GM12878 (cell line): ENCODE measurements at regions of chr6 and their contacts with region 1.

Region 1: GRCh38 chr6:26473758-26474438 is 16.1 kb downstream of the BTN2A1 start:
- DNase-seq: peak; percentile 97
- ATAC-seq: peak; percentile 95
- H3K4me3 ChIP-seq: peak overlapping the region; percentile 77
- H3K27ac ChIP-seq: peak overlapping the region; percentile 100
- H3K4me1 ChIP-seq: peaks cover 29% of the 10 kb centered on the region
- H3K27me3 ChIP-seq: no peaks in the 10 kb centered on the region
- CTCF ChIP-seq: no peak
- EP300 ChIP-seq: no peak; a peak in 1 of 4 replicates
- POLR2A ChIP-seq: peak; percentile 87
- RAD21 ChIP-seq: no peak

Region 2: DNA sequence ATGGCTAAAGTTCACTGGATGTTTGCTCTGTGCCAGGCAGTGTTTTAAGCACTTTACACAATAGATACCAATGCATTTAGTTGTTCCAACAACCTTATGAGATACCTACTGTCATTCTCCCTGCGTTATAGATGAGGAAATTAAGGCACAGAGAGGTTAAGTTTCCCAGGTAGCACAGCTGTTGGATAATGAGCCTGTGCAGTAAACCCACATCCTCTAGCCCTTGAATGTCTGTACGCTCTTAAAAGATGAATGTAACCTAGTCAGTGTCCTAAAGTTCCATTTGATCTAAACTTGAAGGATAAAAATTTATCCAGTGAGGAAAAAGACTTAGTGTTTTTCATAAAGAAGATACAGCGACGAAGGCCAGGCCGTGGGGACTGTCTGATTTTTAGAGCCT is 358.7 kb before region 1 on chr6:
- CTCF ChIA-PET with region 1: no interaction called
- POLR2A ChIA-PET with region 1: no interaction called
- RAD21 ChIA-PET with region 1: no interaction called
- SMC1A ChIA-PET with region 1: no interaction called
- in situ Hi-C with region 1: no loop called
- intact Hi-C with region 1: no loop called
- DNase-seq: no peak
- ATAC-seq: no peak
- H3K4me3 ChIP-seq: no peak overlapping the region
- H3K27ac ChIP-seq: no peak overlapping the region
- H3K4me1 ChIP-seq: no peaks in the 10 kb centered on the region
- H3K27me3 ChIP-seq: no peaks in the 10 kb centered on the region
- CTCF ChIP-seq: no peak
- EP300 ChIP-seq: no peak
- POLR2A ChIP-seq: no peak
- RAD21 ChIP-seq: no peak

Region 3: GRCh38 chr6:26126396-26127235 is 347.3 kb before region 1 on chr6:
- CTCF ChIA-PET with region 1: no interaction called
- POLR2A ChIA-PET with region 1: no interaction called
- RAD21 ChIA-PET with region 1: no interaction called
- SMC1A ChIA-PET with region 1: no interaction called
- in situ Hi-C with region 1: no loop called
- intact Hi-C with region 1: no loop called
- DNase-seq: no peak
- ATAC-seq: no peak
- H3K4me3 ChIP-seq: peak overlapping the region; percentile 83
- H3K27ac ChIP-seq: peak overlapping the region; percentile 89
- H3K4me1 ChIP-seq: peaks cover 2% of the 10 kb centered on the region; the same call in 1 of the 2 replicates
- H3K27me3 ChIP-seq: no peaks in the 10 kb centered on the region
- CTCF ChIP-seq: no peak
- EP300 ChIP-seq: no peak
- POLR2A ChIP-seq: no peak
- RAD21 ChIP-seq: no peak

Region 4: DNA sequence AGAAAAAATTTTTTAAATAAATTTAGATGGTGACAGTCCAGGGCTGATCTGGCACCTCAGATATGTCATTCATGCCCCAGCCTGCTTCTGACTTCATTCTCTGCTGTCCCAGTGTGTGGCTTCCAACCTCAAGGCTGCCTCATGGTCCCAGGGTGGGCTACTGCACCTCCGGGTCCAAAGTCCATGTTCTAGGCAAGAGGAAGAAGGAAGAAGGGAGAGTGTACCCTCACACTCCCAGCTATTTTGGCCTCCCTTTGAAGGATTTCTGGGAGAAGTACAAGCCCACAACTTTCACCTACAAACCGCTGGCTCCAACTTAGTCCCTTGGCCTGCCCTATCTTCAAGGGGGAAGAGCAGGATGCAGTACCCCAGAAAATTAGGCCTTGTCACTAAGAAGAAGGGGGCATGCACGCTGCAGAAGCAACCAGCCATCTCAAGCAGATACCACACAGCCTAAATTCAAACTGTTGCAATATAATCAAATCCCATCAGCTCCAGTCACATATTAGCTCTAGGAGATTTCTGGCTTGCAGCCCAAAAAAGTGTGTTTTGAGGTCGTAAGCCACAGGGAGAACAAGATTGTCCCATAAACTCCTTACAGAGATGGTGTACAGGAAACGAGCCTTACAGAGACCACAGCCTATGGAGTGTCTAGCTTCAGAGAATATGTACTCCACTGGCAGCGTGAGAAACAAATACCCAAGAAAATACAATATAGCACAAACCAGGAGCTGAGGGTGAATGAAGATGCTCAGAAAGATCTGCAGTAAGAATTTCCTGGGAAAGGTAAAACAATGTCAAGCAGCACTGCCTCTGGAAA is 109.8 kb before region 1 on chr6:
- CTCF ChIA-PET with region 1: no interaction called
- POLR2A ChIA-PET with region 1: interaction called, 3 read pairs
- RAD21 ChIA-PET with region 1: interaction called, 10 read pairs
- SMC1A ChIA-PET with region 1: interaction called, 6 read pairs
- in situ Hi-C with region 1: no loop called
- intact Hi-C with region 1: no loop called
- DNase-seq: peak; percentile 17
- ATAC-seq: peak; percentile 39
- H3K4me3 ChIP-seq: peak overlapping the region; percentile 99
- H3K27ac ChIP-seq: peak overlapping the region; percentile 89
- H3K4me1 ChIP-seq: peaks cover 21% of the 10 kb centered on the region
- H3K27me3 ChIP-seq: no peaks in the 10 kb centered on the region
- CTCF ChIP-seq: no peak
- EP300 ChIP-seq: no peak
- POLR2A ChIP-seq: no peak
- RAD21 ChIP-seq: no peak

Region 5: GRCh38 chr6:26445934-26446667 is 27.8 kb before region 1 on chr6:
- CTCF ChIA-PET with region 1: interaction called, 5 read pairs
- POLR2A ChIA-PET with region 1: interaction called, 38 read pairs
- RAD21 ChIA-PET with region 1: interaction called, 27 read pairs
- SMC1A ChIA-PET with region 1: interaction called, 26 read pairs
- in situ Hi-C with region 1: no loop called
- intact Hi-C with region 1: no loop called
- DNase-seq: peak; percentile 76
- ATAC-seq: peak; percentile 98
- H3K4me3 ChIP-seq: peak overlapping the region; percentile 19; the same call in 1 of the 2 replicates
- H3K27ac ChIP-seq: peak overlapping the region; percentile 58
- H3K4me1 ChIP-seq: peaks cover 21% of the 10 kb centered on the region
- H3K27me3 ChIP-seq: no peaks in the 10 kb centered on the region
- CTCF ChIP-seq: no peak
- EP300 ChIP-seq: peak in 1 of 2 experiments; percentile 65; a peak in 1 of 4 replicates
- POLR2A ChIP-seq: no peak
- RAD21 ChIP-seq: no peak

Region 6: GRCh38 chr6:26501482-26501986 is 27.6 kb after region 1 on chr6:
- CTCF ChIA-PET with region 1: no interaction called
- POLR2A ChIA-PET with region 1: interaction called, 3 read pairs
- RAD21 ChIA-PET with region 1: no interaction called
- SMC1A ChIA-PET with region 1: interaction called, 11 read pairs
- in situ Hi-C with region 1: no loop called
- intact Hi-C with region 1: no loop called
- DNase-seq: no peak
- ATAC-seq: peak; percentile 81
- H3K4me3 ChIP-seq: peak overlapping the region; percentile 33; the same call in 1 of the 2 replicates
- H3K27ac ChIP-seq: no peak overlapping the region
- H3K4me1 ChIP-seq: peaks cover 11% of the 10 kb centered on the region; the same call in 1 of the 2 replicates
- H3K27me3 ChIP-seq: no peaks in the 10 kb centered on the region; a peak in 1 of 4 replicates
- CTCF ChIP-seq: no peak
- EP300 ChIP-seq: no peak
- POLR2A ChIP-seq: no peak
- RAD21 ChIP-seq: no peak

Region 7: DNA sequence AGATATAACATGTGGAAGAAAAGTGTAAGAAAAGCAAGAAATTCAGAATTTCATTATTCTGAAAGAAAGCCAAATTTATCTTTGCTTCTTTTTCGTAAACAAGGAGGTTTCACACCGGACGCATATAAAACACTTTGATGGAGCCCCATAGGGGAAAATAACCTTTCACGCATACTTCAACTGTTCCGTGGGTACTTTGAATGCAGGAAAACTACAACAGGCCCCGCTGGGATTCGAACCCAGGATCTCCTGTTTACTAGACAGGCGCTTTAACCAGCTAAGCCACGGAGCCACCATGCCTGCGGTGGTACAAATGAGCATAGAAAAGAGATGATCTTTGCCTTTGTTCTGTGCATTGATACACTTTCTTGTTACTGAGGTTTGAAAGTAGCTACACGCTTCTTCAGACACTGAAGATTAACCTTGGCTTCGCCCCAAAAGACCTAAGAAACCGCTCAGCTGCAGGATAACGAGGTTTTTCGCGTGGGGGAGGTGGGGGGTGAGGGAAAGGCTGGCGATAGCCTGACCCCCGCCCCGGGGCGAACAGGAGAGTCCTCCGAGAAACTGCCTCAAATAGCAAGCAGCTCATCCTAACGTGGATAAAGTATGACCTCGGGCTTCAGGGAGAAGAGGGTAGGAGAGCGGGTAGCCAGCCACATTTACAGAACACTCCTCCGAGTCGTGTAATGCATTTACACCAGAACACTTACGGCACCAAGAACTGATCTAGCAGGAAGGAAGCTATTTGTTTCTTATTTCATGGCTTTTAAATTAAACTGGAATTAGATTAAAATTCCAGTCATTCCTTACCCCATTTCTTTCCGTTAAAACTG is 59.0 kb after region 1 on chr6:
- CTCF ChIA-PET with region 1: interaction called, 3 read pairs
- POLR2A ChIA-PET with region 1: interaction called, 8 read pairs
- RAD21 ChIA-PET with region 1: interaction called, 16 read pairs
- SMC1A ChIA-PET with region 1: interaction called, 12 read pairs
- in situ Hi-C with region 1: no loop called
- intact Hi-C with region 1: no loop called
- DNase-seq: peak; percentile 99
- ATAC-seq: peak; percentile 59
- H3K4me3 ChIP-seq: peak overlapping the region; percentile 79
- H3K27ac ChIP-seq: peak overlapping the region; percentile 73
- H3K4me1 ChIP-seq: peaks cover 17% of the 10 kb centered on the region
- H3K27me3 ChIP-seq: no peaks in the 10 kb centered on the region
- CTCF ChIP-seq: no peak
- EP300 ChIP-seq: peak in 1 of 2 experiments; percentile 55; a peak in 1 of 4 replicates
- POLR2A ChIP-seq: no peak
- RAD21 ChIP-seq: no peak

Region 8: DNA sequence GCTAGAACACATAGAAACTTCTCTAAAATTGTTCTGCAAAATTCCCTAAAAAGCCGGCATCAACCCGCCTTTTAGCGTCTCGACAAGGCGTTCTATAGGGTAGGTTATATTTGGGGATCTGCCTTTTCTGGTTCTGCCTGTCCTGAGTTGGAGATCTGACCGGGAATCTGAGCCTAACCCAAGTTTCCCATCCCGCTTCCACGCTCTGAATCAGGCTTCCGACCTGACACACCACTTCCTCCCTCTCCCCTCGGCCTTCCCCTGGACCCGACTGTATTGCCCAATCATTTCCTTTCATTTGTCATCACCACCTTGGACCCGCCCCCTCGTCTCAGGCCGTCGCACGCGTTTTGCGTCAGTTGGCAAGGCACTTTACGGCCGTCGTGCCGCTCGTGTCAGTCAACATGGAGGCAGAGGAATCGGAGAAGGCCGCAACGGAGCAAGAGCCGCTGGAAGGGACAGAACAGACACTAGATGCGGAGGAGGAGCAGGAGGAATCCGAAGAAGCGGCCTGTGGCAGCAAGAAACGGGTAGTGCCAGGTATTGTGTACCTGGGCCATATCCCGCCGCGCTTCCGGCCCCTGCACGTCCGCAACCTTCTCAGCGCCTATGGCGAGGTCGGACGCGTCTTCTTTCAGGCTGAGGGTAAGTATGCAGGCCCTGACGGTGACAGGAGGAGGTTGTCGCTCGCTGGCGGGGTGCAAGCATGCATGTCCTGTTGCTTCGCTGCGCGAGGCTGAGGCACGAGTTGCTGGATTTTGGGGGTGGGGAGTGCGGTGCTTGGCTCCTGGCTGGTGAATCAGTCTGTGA is 122.9 kb after region 1 on chr6 and contains the start of gene ABT1:
- CTCF ChIA-PET with region 1: interaction called, 13 read pairs
- POLR2A ChIA-PET with region 1: no interaction called
- RAD21 ChIA-PET with region 1: no interaction called
- SMC1A ChIA-PET with region 1: interaction called, 3 read pairs
- in situ Hi-C with region 1: no loop called
- intact Hi-C with region 1: no loop called
- DNase-seq: peak; percentile 96
- ATAC-seq: peak; percentile 88
- H3K4me3 ChIP-seq: peak within 1 kb of the TSS; percentile 93
- H3K27ac ChIP-seq: peak within 1 kb of the TSS; percentile 85
- H3K4me1 ChIP-seq: peaks cover 18% of the 10 kb centered on the region
- H3K27me3 ChIP-seq: no peaks in the 10 kb centered on the region
- CTCF ChIP-seq: no peak
- EP300 ChIP-seq: no peak
- POLR2A ChIP-seq: peak; percentile 97
- RAD21 ChIP-seq: no peak
- polyA plus RNA-seq, gene ABT1: 8.4 to 11.3 TPM